AG04450 (cell line): ENCODE measurements at regions of chr15 and their contacts with region 1.

Region 1: DNA sequence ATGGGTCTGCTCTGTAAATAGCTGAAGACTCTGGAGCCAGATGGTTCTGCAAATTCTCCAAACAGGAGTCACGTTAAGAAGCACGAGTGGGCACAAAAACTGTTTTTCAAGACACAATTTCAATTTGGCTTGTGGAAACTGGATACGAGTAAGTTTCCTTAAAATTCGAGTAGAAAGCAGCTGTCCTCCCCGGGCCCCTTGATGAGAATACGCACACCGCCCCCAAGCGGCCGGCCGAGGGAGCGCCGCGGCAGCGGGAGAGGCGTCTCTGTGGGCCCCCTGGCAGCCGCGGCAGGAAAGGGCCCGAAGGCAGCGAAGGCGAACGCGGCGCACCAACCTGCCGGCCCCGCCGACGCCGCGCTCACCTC is 778 bp upstream of the THBS1 start:
- DNase-seq: peak; percentile 95
- H3K4me3 ChIP-seq: peak overlapping the region; percentile 99
- H3K27ac ChIP-seq: peak overlapping the region; percentile 99
- H3K27me3 ChIP-seq: no peaks in the 10 kb centered on the region
- CTCF ChIP-seq: peak; percentile 92

Region 2: GRCh38 chr15:39171944-39172368 is 408.1 kb before region 1 on chr15:
- CTCF ChIA-PET with region 1: interaction called, 15 read pairs
- POLR2A ChIA-PET with region 1: interaction called, 44 read pairs
- DNase-seq: peak; percentile 96
- H3K4me3 ChIP-seq: no peak overlapping the region
- H3K27ac ChIP-seq: peak overlapping the region; percentile 94
- H3K27me3 ChIP-seq: no peaks in the 10 kb centered on the region
- CTCF ChIP-seq: peak; percentile 66

Region 3: DNA sequence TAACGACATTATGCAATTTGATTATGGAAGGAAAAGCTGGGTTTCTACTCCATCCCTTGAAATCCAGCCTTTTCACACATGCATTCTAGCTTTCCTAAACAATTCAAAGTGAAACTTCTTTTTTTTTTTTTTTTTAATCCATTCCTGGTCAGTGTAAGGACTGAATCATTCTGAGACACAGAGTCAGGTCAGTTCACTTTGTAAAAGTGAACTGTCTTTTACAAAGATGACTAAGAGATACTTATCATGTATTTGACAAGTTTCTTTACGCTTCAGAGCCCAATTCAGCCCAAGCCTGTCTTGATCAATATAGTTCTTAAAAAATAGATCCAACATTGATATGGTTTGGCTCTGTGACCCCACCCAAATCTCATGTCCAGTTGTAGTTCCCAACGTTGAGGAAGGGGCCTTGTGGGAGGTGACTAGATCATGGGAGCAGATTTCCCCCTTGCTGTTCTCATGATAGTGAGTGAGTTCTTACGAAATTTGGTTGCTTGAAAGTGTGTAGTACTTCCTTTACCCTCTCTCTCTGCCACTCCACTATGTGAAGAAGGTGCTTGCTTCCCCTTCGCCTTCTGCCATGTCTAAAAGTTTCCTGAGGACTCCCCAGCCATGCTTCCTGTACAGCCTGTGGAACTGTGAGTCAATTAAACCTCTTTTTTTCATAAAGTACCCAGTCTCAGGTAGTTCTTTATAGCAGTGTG is 344.9 kb before region 1 on chr15:
- CTCF ChIA-PET with region 1: interaction called, 3 read pairs
- POLR2A ChIA-PET with region 1: interaction called, 14 read pairs
- DNase-seq: no peak
- H3K4me3 ChIP-seq: no peak overlapping the region
- H3K27ac ChIP-seq: no peak overlapping the region
- H3K27me3 ChIP-seq: no peaks in the 10 kb centered on the region
- CTCF ChIP-seq: no peak

Region 4: DNA sequence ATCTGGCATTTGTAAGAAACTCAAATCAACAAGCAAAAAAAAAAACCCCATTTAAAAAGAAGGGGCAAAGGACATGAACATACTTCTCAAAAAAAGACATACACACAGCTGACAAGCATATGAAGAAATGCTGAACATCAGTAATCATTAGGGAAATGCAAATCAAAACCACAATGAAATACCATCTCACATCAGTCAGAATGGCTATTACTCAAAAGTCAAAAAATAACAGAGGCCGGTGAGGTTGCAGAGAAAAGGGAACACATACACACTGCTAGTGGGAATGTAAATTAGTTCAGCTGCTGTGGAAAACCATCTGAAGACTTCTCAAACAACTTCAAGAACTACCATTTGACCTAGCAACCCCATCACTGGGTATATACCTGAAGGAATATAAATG is 198.6 kb before region 1 on chr15:
- CTCF ChIA-PET with region 1: no interaction called
- POLR2A ChIA-PET with region 1: no interaction called
- DNase-seq: no peak
- H3K4me3 ChIP-seq: no peak overlapping the region
- H3K27ac ChIP-seq: no peak overlapping the region
- H3K27me3 ChIP-seq: no peaks in the 10 kb centered on the region
- CTCF ChIP-seq: no peak

Region 5: GRCh38 chr15:39404767-39405181 is 175.3 kb before region 1 on chr15:
- CTCF ChIA-PET with region 1: no interaction called
- POLR2A ChIA-PET with region 1: interaction called, 15 read pairs
- DNase-seq: peak; percentile 85
- H3K4me3 ChIP-seq: no peak overlapping the region
- H3K27ac ChIP-seq: peak overlapping the region; percentile 69
- H3K27me3 ChIP-seq: no peaks in the 10 kb centered on the region
- CTCF ChIP-seq: no peak

Region 6: DNA sequence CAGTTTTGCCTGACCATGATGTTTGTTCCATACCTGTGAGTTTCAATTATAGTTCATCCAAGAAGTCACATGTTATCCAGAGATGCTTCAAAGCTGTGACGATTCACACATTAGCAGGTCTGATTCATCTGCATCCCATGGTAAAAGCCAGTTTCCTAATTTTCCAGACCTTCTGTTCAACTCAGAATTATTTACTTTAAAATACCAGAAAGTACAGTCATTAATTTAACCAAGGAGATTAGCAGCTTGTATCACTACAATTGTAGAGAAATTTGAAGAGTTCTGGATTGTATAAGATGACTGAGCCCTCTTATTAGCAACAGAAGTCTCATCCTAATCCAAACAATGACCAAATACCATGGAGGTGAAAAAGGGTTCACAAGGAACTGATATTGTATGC is 75.3 kb before region 1 on chr15:
- CTCF ChIA-PET with region 1: interaction called, 3 read pairs
- POLR2A ChIA-PET with region 1: interaction called, 12 read pairs
- DNase-seq: peak; percentile 56
- H3K4me3 ChIP-seq: no peak overlapping the region
- H3K27ac ChIP-seq: peak overlapping the region; percentile 68
- H3K27me3 ChIP-seq: no peaks in the 10 kb centered on the region
- CTCF ChIP-seq: no peak

Region 7: DNA sequence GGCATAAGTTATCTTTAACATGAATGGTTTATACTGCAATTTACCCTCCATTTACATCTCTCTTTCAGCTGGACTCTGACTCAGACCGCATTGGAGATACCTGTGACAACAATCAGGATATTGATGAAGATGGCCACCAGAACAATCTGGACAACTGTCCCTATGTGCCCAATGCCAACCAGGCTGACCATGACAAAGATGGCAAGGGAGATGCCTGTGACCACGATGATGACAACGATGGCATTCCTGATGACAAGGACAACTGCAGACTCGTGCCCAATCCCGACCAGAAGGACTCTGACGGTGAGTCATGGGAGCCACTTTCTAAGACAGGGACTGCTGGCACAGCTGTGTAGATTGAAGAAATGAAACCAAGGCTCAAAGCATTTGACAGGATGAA is 12.4 kb after region 1 on chr15:
- CTCF ChIA-PET with region 1: interaction called, 3 read pairs
- POLR2A ChIA-PET with region 1: interaction called, 27 read pairs
- DNase-seq: no peak
- H3K4me3 ChIP-seq: peak overlapping the region; percentile 2; the same call in 1 of the 2 replicates
- H3K27ac ChIP-seq: peak overlapping the region; percentile 34
- H3K27me3 ChIP-seq: no peaks in the 10 kb centered on the region
- CTCF ChIP-seq: no peak